ENCODE measurements at regions of chr11 and their contacts with region 1.

Region 1: DNA sequence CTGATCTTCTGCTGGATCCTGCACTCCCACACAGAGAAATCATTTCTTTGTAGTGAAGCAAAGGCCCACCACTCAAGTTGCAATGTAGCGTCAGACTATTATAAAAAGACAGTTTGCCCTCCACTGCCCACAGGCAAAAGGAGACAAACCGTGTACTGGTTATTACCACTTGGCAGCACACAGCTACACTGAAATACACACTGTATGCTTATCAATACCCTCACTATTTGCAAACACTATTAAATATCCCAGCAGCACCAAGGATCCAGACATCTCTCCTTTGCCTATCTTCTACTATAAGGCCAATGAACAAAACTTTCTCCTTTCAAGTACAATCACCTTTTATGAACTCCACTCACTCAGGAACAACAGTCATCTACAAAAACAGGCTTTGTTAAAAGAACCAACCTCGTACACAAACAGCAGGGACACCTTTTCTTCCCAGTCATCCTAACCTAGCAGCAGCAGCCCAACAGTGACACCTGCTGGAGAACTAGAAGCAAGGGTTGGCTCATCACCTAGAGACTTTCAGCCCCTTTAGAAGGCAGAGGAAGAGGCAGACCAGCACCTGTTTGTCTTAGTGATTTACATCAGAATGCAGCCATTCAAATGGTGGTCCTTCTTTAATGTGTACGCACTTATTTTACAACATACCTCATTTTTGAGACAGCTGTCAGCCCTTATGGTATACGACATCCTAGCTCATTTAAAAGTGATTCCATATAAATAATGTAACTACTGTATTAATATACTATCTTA is 56.1 kb downstream of the AMBRA1 start:
- DNase-seq: peak; percentile 79
- ATAC-seq: peak; percentile 93
- H3K4me3 ChIP-seq: no peak overlapping the region
- H3K27ac ChIP-seq: peak overlapping the region; percentile 45
- H3K4me1 ChIP-seq: peaks cover 15% of the 10 kb centered on the region
- H3K27me3 ChIP-seq: no peaks in the 10 kb centered on the region
- CTCF ChIP-seq: peak; percentile 94
- EP300 ChIP-seq: no peak
- POLR2A ChIP-seq: no peak
- RAD21 ChIP-seq: peak; percentile 78

Region 2: GRCh38 chr11:46369458-46370152 is 168.1 kb before region 1 on chr11:
- CTCF ChIA-PET with region 1: interaction called, 11 read pairs
- POLR2A ChIA-PET with region 1: no interaction called
- in situ Hi-C with region 1: no loop called
- intact Hi-C with region 1: loop called (anchors 1 kb)
- DNase-seq: peak; percentile 70
- ATAC-seq: peak; percentile 86
- H3K4me3 ChIP-seq: no peak overlapping the region
- H3K27ac ChIP-seq: no peak overlapping the region
- H3K4me1 ChIP-seq: peaks cover 15% of the 10 kb centered on the region
- H3K27me3 ChIP-seq: no peaks in the 10 kb centered on the region
- CTCF ChIP-seq: peak; percentile 88
- EP300 ChIP-seq: no peak
- POLR2A ChIP-seq: no peak
- RAD21 ChIP-seq: peak; percentile 53

Region 3: GRCh38 chr11:46389450-46390253 is 148.1 kb before region 1 on chr11:
- CTCF ChIA-PET with region 1: interaction called, 3 read pairs
- POLR2A ChIA-PET with region 1: no interaction called
- in situ Hi-C with region 1: loop called (anchors 5 kb)
- intact Hi-C with region 1: loop called (anchors 2 kb)
- DNase-seq: peak; percentile 61
- ATAC-seq: peak; percentile 72
- H3K4me3 ChIP-seq: peak overlapping the region; percentile 58 to 82 (median 61)
- H3K27ac ChIP-seq: no peak overlapping the region
- H3K4me1 ChIP-seq: peaks cover 57% of the 10 kb centered on the region
- H3K27me3 ChIP-seq: peaks cover 13 to 36% of the 10 kb centered on the region in 2 experiments
- CTCF ChIP-seq: peak; percentile 97
- EP300 ChIP-seq: no peak
- POLR2A ChIP-seq: no peak
- RAD21 ChIP-seq: peak; percentile 86

Region 4: GRCh38 chr11:46489661-46490560 is 47.8 kb before region 1 on chr11:
- CTCF ChIA-PET with region 1: interaction called, 23 read pairs
- POLR2A ChIA-PET with region 1: no interaction called
- in situ Hi-C with region 1: loop called (anchors 5 kb)
- intact Hi-C with region 1: no loop called
- DNase-seq: peak; percentile 59
- ATAC-seq: peak; percentile 93
- H3K4me3 ChIP-seq: no peak overlapping the region
- H3K27ac ChIP-seq: no peak overlapping the region
- H3K4me1 ChIP-seq: no peaks in the 10 kb centered on the region
- H3K27me3 ChIP-seq: no peaks in the 10 kb centered on the region
- CTCF ChIP-seq: peak; percentile 66
- EP300 ChIP-seq: no peak
- POLR2A ChIP-seq: no peak
- RAD21 ChIP-seq: peak; percentile 65; the same call in 1 of the 2 replicates

Region 5: DNA sequence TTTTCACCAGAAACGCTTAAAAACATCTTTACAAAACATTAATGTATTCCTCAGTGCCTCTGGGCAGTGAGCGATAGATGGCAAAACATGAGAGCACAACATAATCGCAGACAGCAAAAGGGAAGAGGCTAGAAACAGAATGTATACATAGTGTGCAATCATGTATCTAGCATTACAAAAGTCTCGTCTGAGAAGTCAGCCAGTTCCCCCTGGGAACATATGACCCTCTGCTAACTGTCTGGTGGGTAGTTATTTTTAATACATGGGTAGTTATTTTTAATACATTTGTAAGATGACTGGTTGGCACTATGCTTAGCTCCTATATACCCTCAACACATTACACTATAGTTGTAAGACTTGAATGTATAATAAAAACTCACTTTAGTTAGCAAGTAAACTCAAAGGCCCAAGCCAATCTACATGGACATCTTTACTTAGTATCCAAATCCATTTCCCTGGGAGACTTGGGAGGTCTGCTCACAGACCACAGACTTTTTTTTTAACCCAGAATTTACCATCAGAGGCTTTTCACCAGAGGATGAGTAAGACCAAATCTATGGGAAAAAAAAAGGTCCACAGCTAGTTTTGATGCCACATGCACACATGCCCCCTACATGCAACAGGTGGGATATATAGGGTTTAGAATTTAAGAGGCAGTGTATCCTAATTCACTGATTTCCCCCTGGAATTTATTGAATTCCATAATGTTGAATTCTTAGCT is 15.6 kb before region 1 on chr11:
- CTCF ChIA-PET with region 1: no interaction called
- POLR2A ChIA-PET with region 1: no interaction called
- in situ Hi-C with region 1: no loop called
- intact Hi-C with region 1: no loop called
- DNase-seq: no peak
- ATAC-seq: peak; percentile 29; the same call in 2 of the 3 replicates
- H3K4me3 ChIP-seq: peak overlapping the region in 1 of 3 experiments; percentile 29; a peak in 2 of 6 replicates
- H3K27ac ChIP-seq: peak overlapping the region; percentile 33
- H3K4me1 ChIP-seq: peaks cover 78% of the 10 kb centered on the region
- H3K27me3 ChIP-seq: no peaks in the 10 kb centered on the region
- CTCF ChIP-seq: 0 out of 2 replicates have a peak, but pooled peaks have one; percentile 14
- EP300 ChIP-seq: no peak
- POLR2A ChIP-seq: no peak
- RAD21 ChIP-seq: no peak

Region 6: GRCh38 chr11:46616998-46617675 is 79.4 kb after region 1 on chr11 and contains the starts of genes ATG13 and HARBI1:
- CTCF ChIA-PET with region 1: no interaction called
- POLR2A ChIA-PET with region 1: no interaction called
- in situ Hi-C with region 1: no loop called
- intact Hi-C with region 1: loop called (anchors 5 kb)
- DNase-seq: peak; percentile 77
- ATAC-seq: peak; percentile 97
- H3K4me3 ChIP-seq: peak within 1 kb of the TSS; percentile 99 to 100 (median 100)
- H3K27ac ChIP-seq: peak within 1 kb of the TSS; percentile 98
- H3K4me1 ChIP-seq: peaks cover 53% of the 10 kb centered on the region
- H3K27me3 ChIP-seq: no peaks in the 10 kb centered on the region; a peak in 1 of 5 replicates
- CTCF ChIP-seq: no peak
- EP300 ChIP-seq: peak in 1 of 2 experiments; percentile 45; a peak in 1 of 4 replicates
- POLR2A ChIP-seq: peak; percentile 60 to 87
- RAD21 ChIP-seq: 0 out of 2 replicates have a peak, but pooled peaks have one; percentile 12
- total RNA-seq, gene ATG13: 55.0 and 61.8 TPM in 2 replicates
- total RNA-seq, gene HARBI1: 4.8 and 6.9 TPM in 2 replicates